ENCODE measurements at regions of chr21 and their contacts with region 1.

Region 1: DNA sequence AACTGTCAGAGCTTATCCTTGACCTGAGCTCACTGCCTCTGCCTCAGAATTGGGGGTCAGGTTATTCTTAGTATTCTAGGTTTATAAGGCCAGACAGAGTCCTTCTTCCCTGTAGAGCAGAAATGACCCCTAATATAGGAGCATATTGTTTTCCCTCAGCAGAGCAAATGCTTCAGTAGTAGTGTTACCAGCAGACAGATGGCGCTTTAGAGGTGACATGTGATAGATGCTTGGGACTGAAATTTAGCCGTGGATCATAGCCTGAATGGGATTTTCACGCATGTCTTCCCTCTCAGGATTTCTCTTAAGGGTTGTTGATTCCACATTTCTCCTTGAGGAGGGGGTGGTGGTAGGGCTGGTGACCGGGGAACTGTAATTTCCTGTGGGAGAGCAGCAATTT is 24.5 kb downstream of the ADARB1 start:
- DNase-seq: no peak
- H3K4me3 ChIP-seq: no peak overlapping the region
- H3K27me3 ChIP-seq: no peaks in the 10 kb centered on the region
- CTCF ChIP-seq: peak; percentile 43

Region 2: DNA sequence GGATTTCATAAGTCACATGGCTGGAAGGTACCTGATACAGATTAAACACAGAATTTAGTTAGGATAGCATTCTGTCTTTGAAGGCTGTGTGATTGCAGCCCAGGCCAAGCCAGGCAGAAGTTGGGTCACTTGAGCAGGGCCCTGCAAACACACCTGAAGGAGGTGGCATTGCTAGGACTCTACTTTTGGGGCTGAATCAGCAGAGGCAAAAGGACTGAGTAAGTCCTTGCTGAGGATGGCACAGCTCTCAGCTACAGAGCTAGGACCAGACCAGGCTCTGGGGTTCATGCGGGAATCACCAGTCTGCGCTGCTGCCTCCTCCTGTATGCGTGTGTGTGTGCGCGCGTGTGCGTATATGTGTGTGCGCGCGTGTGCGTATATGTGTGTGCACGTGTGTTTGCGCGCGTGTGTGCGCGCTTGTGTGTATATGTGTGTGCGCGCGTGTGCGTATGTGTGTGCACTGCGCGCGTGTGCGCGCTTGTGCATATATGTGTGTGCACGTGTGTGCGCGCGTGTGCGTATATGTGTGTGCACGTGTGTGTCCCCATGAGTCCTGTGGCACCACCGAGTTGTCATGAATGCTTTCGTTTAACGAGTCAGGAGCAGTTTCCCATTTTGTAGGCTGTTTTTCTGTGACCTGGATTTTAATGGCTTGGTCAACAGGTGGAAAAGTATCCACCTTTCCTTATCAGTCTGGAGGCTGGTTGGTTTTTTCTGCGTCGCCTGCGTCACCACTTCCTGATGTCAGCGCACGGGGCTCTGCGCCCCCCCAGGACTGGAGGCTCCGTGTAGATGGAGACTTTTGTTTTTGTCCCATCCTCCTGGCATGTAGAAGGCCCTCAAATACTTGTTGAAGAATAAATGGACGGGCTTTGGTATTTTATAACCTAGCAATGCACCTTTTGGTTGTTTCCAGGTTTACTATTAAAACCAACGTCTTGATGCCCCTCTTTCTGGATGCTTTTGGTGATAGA is 10.2 kb after region 1 on chr21:
- CTCF ChIA-PET with region 1: interaction called, 15 read pairs
- POLR2A ChIA-PET with region 1: no interaction called
- DNase-seq: no peak
- H3K4me3 ChIP-seq: no peak overlapping the region
- H3K27me3 ChIP-seq: no peaks in the 10 kb centered on the region
- CTCF ChIP-seq: no peak

Region 3: DNA sequence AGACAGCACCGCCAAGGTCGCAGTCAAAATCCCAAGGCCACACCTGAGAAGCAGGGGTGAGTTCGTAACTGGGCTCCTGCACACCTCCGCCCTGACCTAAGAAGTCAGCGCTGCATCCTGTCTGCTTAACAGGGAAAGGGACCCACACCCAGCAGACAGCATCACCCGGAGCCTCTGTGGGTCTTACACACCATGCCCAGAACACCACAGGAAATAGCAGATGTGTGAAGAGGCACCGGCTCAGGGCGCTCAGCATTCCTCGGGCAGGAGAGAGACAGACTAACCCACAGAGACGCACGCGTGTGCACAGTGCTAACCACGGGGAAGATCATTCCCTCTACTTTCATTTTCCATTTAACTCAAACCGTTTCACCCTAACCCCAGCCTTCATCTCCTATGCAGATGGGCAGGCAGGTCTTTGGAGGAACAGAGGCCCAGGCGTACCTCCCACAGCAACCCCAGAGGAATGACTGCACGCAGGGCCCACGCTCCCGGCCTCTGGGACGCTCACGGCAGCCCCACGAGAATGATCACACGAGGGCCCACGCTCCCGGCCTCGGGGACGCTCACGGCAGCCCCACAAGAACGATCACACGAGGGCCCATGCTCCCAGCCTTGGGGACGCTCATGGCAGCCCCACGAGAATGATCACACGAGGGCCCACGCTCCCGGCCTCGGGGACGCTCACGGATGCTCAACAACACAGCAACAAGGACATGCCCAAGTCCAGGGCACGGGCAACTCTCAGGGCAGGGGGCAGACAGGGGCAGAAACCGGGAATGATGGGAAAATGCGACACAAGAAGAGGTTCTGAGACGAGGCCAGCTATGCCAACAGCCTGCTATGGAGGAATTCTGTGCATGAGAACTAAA is 167.9 kb after region 1 on chr21:
- CTCF ChIA-PET with region 1: no interaction called
- POLR2A ChIA-PET with region 1: no interaction called
- DNase-seq: no peak
- H3K4me3 ChIP-seq: no peak overlapping the region
- H3K27me3 ChIP-seq: no peaks in the 10 kb centered on the region
- CTCF ChIP-seq: no peak

Measured in BJ (cell line).